Psoas muscle (tissue), 8 donors: ENCODE measurements at regions of chr2 and their contacts with region 1.

Region 1: DNA sequence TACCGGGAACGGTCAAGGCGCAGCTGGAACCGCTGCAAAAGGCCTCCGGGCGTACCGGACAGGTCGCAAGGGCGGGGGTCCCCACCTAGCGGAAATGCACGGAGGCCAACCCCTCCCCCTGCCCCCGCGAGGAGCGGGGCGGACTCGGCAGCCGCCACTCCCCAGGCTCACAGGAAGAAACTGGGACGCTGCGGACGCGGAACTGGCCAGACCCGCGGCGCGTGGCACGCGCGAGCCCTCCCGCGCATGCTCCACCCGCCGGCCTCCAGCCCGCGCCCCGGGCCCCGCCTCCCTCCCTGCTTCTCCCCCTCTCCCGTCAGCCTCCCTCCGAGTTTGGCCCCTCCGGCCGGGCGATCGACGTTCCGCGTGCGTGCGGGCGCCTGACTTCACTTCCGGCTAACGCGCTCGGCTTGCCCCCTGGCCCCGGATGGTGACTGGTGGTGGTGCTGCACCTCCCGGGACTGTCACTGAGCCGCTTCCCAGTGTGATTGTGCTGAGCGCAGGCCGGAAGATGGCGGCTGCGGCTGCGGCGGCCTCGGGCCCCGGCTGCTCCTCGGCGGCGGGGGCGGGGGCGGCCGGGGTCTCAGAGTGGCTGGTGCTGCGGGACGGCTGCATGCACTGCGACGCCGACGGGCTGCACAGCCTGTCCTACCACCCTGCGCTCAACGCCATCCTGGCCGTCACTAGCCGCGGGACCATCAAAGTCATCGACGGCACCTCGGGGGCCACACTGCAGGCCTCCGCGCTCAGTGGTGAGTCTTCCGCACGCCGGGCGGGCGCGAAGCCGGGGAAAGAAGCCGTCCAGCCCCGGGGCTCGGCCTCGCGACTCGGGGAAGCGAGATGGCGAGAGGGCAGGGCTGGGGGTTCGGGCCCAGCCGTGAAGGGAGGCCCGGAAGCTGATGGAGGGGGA is at the start of gene BIRC6:
- DNase-seq: peak; percentile 99 to 100
- ATAC-seq: peak; percentile 95 to 96 (median 96)
- H3K4me3 ChIP-seq: peak within 1 kb of the TSS; percentile 99
- H3K27ac ChIP-seq: peak within 1 kb of the TSS; percentile 99
- H3K4me1 ChIP-seq: peaks cover 28% of the 10 kb centered on the region
- H3K27me3 ChIP-seq: no peaks in the 10 kb centered on the region
- CTCF ChIP-seq: peak; percentile 9
- total RNA-seq, gene BIRC6: 38.1 to 66.7 (median 43.5) TPM

Region 2: DNA sequence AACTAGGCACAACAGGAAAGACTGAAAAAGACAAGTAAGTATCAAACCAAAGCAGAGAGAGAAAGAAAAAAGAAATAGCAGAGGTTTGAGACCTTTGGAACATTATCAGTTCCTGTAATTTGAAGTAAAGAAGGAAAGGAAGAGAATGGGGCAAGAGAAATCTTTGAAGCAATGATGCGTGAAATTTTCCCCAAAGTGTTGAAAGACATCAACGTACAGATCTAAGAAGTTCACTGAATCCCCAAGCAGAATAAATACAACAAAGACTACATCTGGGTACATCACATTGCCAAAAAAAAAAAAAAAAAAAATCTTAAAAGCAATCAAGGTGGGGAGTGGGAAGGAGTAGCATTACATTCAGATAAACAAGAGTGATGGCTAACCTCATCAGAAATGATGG is 197.3 kb before region 1 on chr2:
- intact Hi-C with region 1: no loop called
- DNase-seq: no peak
- ATAC-seq: no peak
- H3K4me3 ChIP-seq: no peak overlapping the region
- H3K27ac ChIP-seq: no peak overlapping the region
- H3K4me1 ChIP-seq: peaks cover 6% of the 10 kb centered on the region
- H3K27me3 ChIP-seq: no peaks in the 10 kb centered on the region
- CTCF ChIP-seq: no peak

Region 3: GRCh38 chr2:32277674-32278482 is 79.1 kb before region 1 on chr2 and contains the start of gene YIPF4:
- intact Hi-C with region 1: loop called in 1 of 2 experiments (anchors 5 kb)
- DNase-seq: peak; percentile 84 to 93
- ATAC-seq: peak; percentile 99 to 100 (median 100)
- H3K4me3 ChIP-seq: peak within 1 kb of the TSS; percentile 95
- H3K27ac ChIP-seq: peak within 1 kb of the TSS; percentile 97
- H3K4me1 ChIP-seq: no peaks in the 10 kb centered on the region
- H3K27me3 ChIP-seq: no peaks in the 10 kb centered on the region
- CTCF ChIP-seq: no peak
- total RNA-seq, gene YIPF4: 38.3 to 62.0 (median 43.5) TPM

Region 4: GRCh38 chr2:32310577-32310976 is 46.4 kb before region 1 on chr2:
- intact Hi-C with region 1: no loop called
- DNase-seq: no peak
- ATAC-seq: no peak
- H3K4me3 ChIP-seq: no peak overlapping the region
- H3K27ac ChIP-seq: no peak overlapping the region
- H3K4me1 ChIP-seq: no peaks in the 10 kb centered on the region
- H3K27me3 ChIP-seq: no peaks in the 10 kb centered on the region
- CTCF ChIP-seq: no peak